GM10248 (cell line): ENCODE measurements at regions of chr17 and their contacts with region 1.

Region 1: GRCh38 chr17:8173056-8173870 is 2.9 kb downstream of the TMEM107 start:
- DNase-seq: peak; percentile 82
- CTCF ChIP-seq: no peak

Region 2: DNA sequence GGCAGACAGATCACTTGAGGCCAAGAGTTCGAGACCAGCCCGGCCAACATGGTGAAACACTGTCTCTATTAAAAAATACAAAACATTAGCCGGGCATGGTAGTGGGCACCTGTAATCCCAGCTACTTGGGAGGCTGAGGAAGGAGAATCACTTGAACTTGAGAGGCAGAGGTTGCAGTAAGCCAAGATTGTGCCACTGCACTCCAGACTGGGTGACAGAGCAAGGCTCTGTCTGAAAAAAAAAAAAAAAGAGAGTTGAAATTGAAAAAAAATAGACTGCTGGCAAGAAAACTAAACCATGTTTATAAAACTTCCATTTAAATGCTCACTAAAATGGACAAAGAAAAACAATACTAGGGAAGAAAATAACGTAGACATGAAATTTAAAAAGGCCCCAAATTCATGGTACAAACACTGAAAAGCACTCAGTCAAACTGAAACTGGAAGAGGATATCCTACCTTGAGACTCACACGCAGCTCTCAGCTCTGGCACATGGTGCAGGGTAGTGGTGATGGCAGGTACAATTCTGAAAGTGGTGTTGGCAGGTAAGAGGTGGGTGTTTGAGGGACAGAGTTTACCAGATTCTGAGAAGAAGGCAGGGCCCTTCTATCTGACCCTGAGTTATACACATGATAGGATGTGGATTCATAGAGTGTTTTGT is 222.0 kb before region 1 on chr17:
- CTCF ChIA-PET with region 1: no interaction called
- POLR2A ChIA-PET with region 1: no interaction called
- DNase-seq: peak; percentile 71
- CTCF ChIP-seq: no peak

Region 3: GRCh38 chr17:8029135-8029534 is 144.1 kb before region 1 on chr17:
- CTCF ChIA-PET with region 1: no interaction called
- POLR2A ChIA-PET with region 1: no interaction called
- DNase-seq: no peak
- CTCF ChIP-seq: no peak

Region 4: GRCh38 chr17:8105957-8106398 is 67.3 kb before region 1 on chr17:
- CTCF ChIA-PET with region 1: no interaction called
- POLR2A ChIA-PET with region 1: no interaction called
- DNase-seq: no peak
- CTCF ChIP-seq: no peak

Region 5: DNA sequence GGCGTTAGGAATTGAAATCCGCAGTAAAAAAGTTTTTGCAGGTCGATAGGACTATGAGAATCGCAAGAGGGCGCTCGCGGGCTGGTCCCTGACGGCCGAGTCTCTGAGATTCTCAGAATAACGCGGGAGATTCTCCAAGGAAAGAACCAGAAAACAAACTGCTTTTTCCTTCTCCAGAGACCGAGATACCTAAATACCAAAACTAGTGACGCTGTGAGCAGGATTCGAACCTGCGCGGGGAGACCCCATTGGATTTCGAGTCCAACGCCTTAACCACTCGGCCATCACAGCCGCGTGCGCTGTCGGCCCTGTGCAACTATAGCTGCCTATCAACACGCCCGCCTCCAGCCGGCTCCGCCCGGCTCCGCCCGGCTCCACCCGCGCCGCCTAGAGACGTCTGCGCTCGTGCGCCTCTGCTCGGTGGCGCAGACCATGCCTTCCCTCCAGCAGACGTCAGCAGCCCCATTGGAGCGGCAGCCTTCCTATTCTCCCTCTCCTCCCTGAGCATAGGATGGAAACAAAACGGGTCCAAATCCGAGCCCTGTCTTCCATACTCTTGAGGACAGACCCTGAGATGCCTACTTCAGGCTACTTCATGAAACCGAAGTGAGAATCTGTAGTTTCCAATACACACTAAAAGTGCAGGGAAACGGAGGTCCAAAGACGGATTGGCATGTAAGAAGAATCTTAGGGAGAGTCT is 34.4 kb before region 1 on chr17:
- CTCF ChIA-PET with region 1: interaction called, 8 read pairs
- POLR2A ChIA-PET with region 1: interaction called, 21 read pairs
- DNase-seq: peak; percentile 91
- CTCF ChIP-seq: peak; percentile 67

Region 6: GRCh38 chr17:8156246-8156992 is 16.8 kb before region 1 on chr17:
- CTCF ChIA-PET with region 1: interaction called, 15 read pairs
- POLR2A ChIA-PET with region 1: interaction called, 28 read pairs
- DNase-seq: peak; percentile 96
- CTCF ChIP-seq: no peak

Region 7: DNA sequence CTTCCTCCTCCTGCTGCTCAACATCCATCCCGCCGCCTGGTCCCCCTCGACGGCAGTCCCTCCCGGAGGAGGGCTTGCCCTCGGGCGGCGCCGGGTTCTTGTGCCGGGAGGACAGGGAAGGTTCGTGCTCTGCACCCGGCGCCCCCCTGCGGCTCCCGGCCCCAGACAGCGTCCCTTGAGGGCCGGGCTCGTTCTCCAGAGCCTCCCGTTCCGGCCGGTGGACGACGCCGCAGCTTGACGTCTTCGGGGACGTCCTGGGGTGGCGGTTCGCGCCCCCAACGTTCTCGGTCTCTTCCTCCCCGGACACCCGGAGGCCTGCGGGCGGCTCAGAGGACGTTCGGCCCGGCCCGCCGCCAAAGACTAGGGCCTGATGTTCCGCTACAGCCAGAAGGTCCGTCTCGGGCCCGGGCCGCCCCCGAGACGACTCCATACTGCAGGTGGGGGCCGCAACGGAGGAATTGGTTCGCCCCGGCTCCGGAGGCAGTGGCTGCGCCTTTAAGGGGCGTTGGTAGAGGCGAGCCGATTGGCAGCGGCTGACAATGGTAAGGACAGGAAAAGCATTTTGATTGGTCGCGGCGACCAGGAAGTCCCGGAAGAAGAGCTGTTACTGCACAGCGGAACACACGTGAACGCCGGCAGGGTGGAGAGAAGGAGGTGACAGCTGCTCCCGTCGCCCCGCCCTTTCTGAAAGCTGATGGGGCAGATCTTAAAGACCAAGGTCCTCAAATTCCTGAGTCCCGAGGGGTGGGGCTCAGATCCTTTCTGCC is 16.6 kb after region 1 on chr17 and contains the start of gene BORCS6:
- CTCF ChIA-PET with region 1: interaction called, 11 read pairs
- POLR2A ChIA-PET with region 1: interaction called, 89 read pairs
- DNase-seq: peak; percentile 91
- CTCF ChIP-seq: peak; percentile 33

Region 8: DNA sequence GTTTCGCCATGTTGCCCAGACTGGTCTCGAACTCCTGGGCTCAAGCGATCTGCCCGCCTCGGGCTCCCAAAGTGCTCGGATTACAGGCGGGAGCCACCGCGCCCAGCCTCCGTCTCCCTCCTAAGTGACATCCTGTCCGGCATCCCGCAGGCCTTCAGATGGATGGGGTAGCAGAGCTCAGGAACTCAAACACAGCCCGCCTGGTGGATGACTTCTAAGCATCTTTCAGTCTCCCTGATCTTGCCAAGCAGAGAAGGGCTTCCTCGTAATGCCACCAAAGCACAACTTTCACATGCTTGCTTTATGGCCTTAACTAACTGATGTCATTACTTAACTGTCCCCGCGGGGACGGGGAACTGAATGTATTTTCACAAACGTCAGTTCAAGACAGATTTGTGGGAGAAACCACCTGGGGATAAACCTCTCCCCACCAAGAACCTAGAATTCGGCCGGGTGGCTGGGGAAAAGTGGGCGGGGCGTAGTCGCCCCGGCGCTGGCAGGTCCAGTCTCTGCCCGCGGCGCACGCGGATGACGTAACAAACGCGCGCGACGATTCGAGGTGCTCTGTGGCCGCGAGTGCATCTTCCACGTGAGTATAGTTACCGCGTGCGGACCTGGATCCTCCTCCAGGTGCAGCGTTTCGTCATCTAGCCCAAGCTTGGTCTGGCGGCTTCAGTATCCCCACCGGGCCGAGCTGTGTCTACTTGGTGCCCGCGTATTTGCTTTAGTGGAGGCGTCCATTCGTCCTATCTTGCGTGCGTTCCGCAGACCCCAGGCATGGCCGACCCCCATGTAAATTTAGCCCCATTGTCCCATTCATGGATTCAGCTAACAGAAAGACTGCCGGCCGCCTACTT is 75.7 kb after region 1 on chr17 and contains the start of gene PFAS:
- CTCF ChIA-PET with region 1: no interaction called
- POLR2A ChIA-PET with region 1: interaction called, 12 read pairs
- DNase-seq: peak; percentile 94
- CTCF ChIP-seq: no peak